ENCODE measurements at regions of chr7 and their contacts with region 1.

Region 1: DNA sequence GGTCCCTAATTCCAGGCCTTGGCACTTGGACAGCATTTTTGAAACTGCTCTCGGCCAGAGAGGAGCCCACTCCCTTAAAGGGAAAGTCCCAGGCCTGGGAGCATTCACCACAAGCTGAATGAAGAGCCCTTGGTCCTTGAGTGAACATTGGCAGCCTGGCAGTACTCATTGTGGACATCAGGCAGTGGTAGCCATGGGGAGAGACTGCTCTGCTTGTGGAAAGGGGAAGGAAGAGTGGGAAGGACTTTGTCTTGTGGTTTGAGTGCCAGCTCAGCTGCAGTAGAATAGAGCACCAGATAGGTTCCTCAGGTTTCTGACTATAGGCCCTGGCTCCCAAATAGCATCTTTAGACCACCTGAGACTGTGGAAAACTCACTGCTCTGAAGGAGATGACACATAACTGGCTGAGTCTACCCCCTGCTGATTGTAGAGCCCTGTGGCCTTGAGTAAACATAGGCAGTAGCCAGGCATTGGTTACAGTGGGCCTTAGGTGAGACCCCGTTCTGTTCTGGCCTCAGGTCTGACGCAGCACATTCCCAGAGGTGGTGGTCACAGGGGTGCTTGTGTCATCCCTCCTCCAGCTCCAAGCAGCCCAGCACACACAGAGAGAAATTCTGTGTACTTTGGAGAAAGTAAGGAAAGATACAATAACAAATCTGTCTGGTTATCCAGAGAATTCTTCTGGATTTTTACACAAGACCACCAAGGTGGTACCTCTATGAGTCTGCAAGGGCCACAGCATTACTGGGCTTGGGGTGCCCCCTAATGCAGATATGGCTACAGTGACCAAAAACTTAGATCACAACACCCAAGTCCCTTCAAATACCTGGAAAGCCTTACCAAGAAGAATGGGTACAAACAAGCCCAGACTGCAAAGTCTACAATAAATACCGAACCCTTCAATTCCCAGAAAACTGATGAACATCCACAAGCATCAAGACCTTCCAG is 153.8 kb downstream of the GNAI1 start:
- DNase-seq: no peak
- ATAC-seq: no peak
- H3K4me3 ChIP-seq: no peak overlapping the region
- H3K27ac ChIP-seq: no peak overlapping the region
- H3K4me1 ChIP-seq: no peaks in the 10 kb centered on the region
- H3K27me3 ChIP-seq: no peaks in the 10 kb centered on the region

Region 2: GRCh38 chr7:80124526-80125264 is 163.8 kb before region 1 on chr7:
- intact Hi-C with region 1: no loop called
- DNase-seq: no peak
- ATAC-seq: no peak
- H3K4me3 ChIP-seq: no peak overlapping the region
- H3K27ac ChIP-seq: no peak overlapping the region
- H3K4me1 ChIP-seq: no peaks in the 10 kb centered on the region
- H3K27me3 ChIP-seq: no peaks in the 10 kb centered on the region

Region 3: DNA sequence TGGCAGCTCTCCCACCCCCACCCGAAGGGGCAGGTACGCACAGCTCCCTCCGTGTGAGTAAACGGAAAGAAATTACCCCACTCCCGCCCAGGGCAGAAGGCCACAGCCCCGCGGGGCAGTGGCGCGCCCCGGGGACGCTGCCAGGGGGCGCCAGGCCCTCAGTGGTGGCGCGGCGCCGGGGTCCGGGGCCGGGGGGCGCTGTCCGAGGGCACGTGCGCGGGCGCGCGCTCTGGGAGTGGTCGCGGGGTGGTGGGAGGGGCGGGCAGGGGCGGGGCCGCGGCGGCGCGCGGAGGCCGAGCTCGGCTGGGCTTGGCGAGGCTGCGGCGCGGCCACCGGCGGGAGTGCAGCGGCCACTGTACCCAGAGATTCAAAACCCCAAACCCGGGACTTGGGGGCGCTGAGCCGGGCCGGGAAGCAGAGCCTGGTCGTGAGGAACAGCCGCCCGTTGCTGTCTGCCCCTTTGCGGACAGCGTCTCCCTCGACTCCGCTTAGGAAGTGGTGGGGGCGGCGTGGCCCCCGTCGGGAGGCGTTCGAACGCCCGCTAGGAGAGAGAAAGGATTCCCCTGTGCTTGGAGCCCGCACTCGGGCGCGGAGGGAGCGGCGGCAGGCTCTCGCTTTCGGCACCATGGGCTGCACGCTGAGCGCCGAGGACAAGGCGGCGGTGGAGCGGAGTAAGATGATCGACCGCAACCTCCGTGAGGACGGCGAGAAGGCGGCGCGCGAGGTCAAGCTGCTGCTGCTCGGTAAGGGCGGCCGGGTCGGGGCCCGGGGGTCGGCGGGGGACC is 153.7 kb before region 1 on chr7 and contains the start of gene GNAI1:
- intact Hi-C with region 1: loop called in 2 of 4 experiments (anchors 10 kb)
- DNase-seq: peak; percentile 67 to 88 (median 85)
- ATAC-seq: peak; percentile 89 to 93
- H3K4me3 ChIP-seq: peak within 1 kb of the TSS; percentile 89
- H3K27ac ChIP-seq: peak within 1 kb of the TSS; percentile 81
- H3K4me1 ChIP-seq: no peaks in the 10 kb centered on the region
- H3K27me3 ChIP-seq: no peaks in the 10 kb centered on the region
- total RNA-seq, gene GNAI1: 7.9 to 10.2 (median 9.5) TPM

Measured in right cardiac atrium (tissue), 5 donors.